ENCODE measurements at regions of chr5 and their contacts with region 1.

Region 1: GRCh38 chr5:14925326-14925725 is 53.7 kb upstream of the ANKH start:
- DNase-seq: no peak
- H3K4me3 Mint-ChIP-seq: peak overlapping the region; percentile 35
- H3K27ac Mint-ChIP-seq: peak overlapping the region; percentile 91
- H3K4me1 Mint-ChIP-seq: peaks cover 54% of the 10 kb centered on the region
- H3K27me3 Mint-ChIP-seq: no peaks in the 10 kb centered on the region

Region 2: DNA sequence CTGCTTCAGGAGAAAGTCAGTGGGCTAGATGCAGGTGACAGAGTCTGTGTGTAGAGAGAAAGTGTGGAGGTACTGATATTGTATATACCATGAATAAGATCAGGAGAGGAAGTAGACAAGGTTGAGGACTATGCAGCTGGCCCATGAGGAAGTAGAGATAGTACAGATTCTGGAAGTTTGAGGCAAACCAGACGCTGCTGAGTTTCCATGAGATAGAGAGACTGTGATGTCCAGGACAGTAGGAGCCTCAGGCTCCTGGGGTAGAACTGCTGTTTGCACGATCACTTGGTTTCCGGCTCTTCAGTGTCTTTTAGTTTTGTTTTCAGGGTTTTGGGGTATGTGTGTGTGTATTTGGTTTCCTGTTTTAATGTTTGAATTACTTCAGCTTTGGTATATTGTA is 330.1 kb before region 1 on chr5:
- CTCF ChIA-PET with region 1: no interaction called
- POLR2A ChIA-PET with region 1: no interaction called
- intact Hi-C with region 1: loop called (anchors 10 kb)
- DNase-seq: peak; percentile 50
- H3K4me3 Mint-ChIP-seq: peak overlapping the region; percentile 63
- H3K27ac Mint-ChIP-seq: peak overlapping the region; percentile 70
- H3K4me1 Mint-ChIP-seq: peaks cover 84% of the 10 kb centered on the region
- H3K27me3 Mint-ChIP-seq: no peaks in the 10 kb centered on the region

Region 3: GRCh38 chr5:14706615-14707021 is 218.7 kb before region 1 on chr5:
- CTCF ChIA-PET with region 1: no interaction called
- POLR2A ChIA-PET with region 1: no interaction called
- intact Hi-C with region 1: loop called (anchors 1 kb)
- DNase-seq: peak; percentile 56
- H3K4me3 Mint-ChIP-seq: peak overlapping the region; percentile 57
- H3K27ac Mint-ChIP-seq: peak overlapping the region; percentile 94
- H3K4me1 Mint-ChIP-seq: peaks cover 74% of the 10 kb centered on the region
- H3K27me3 Mint-ChIP-seq: no peaks in the 10 kb centered on the region

Region 4: DNA sequence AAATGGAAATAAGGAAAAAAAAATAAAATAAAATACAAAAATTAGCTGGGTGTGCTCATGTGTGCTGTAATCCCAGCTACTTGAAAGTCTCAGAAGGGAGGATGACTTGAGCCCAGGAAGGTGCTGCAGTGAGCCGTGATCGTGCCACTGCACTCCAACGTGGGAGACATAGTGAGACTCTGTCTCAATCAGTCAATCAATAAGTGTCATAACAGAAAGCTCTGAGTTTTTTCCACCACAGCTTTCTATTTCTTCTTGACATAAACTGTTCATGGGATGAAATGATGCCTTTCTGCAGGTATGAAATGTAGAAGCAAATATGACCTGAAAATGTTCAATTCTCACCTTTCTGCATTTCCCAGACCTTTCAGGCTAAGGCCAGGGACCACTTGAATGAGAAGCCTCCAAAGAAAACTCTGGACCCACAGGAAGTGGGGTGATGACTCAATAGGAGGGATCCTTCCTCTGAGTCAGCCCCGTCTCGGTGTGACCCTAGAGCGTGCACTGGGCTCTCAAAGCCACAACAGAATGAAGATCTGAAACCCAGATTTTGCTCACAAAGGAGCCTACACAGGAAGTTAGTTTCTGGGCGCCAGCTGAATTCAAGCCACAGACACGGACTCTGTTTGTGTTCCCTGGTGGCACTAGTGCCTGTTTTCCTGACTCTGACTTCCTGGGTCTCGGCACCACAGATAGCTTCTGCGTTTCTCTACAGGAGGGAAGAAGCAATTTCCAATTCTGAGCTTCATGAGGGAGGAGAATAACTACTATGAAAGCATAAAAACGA is 115.8 kb before region 1 on chr5:
- CTCF ChIA-PET with region 1: no interaction called
- POLR2A ChIA-PET with region 1: interaction called, 7 read pairs
- intact Hi-C with region 1: loop called (anchors 1 kb)
- DNase-seq: peak; percentile 90
- H3K4me3 Mint-ChIP-seq: peak overlapping the region; percentile 74
- H3K27ac Mint-ChIP-seq: peak overlapping the region; percentile 80
- H3K4me1 Mint-ChIP-seq: peaks cover 57% of the 10 kb centered on the region
- H3K27me3 Mint-ChIP-seq: no peaks in the 10 kb centered on the region

Region 5: DNA sequence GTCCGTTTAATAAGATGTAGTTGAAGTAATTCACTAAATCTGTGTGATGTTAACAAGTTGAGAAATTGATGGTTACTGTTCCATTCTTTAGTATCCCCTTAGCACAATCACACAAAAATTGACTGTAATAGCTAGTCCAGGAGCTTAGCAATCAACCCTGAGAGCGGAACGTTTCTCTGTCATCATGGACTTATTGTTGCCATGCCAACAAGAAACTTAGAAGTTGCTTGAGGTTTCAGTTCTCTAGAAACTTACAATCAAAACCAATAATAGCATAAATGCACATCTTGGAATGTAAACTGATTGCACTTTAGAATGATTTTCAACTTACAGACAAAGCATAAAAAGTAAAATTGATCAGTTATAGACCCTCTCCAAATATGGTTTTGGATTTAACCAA is 71.7 kb after region 1 on chr5:
- CTCF ChIA-PET with region 1: no interaction called
- POLR2A ChIA-PET with region 1: interaction called, 5 read pairs
- intact Hi-C with region 1: loop called (anchors 1 kb)
- DNase-seq: no peak
- H3K4me3 Mint-ChIP-seq: no peak overlapping the region
- H3K27ac Mint-ChIP-seq: no peak overlapping the region
- H3K4me1 Mint-ChIP-seq: peaks cover 21% of the 10 kb centered on the region
- H3K27me3 Mint-ChIP-seq: no peaks in the 10 kb centered on the region